ENCODE measurements at regions of chr16 and their contacts with region 1.

Region 1: DNA sequence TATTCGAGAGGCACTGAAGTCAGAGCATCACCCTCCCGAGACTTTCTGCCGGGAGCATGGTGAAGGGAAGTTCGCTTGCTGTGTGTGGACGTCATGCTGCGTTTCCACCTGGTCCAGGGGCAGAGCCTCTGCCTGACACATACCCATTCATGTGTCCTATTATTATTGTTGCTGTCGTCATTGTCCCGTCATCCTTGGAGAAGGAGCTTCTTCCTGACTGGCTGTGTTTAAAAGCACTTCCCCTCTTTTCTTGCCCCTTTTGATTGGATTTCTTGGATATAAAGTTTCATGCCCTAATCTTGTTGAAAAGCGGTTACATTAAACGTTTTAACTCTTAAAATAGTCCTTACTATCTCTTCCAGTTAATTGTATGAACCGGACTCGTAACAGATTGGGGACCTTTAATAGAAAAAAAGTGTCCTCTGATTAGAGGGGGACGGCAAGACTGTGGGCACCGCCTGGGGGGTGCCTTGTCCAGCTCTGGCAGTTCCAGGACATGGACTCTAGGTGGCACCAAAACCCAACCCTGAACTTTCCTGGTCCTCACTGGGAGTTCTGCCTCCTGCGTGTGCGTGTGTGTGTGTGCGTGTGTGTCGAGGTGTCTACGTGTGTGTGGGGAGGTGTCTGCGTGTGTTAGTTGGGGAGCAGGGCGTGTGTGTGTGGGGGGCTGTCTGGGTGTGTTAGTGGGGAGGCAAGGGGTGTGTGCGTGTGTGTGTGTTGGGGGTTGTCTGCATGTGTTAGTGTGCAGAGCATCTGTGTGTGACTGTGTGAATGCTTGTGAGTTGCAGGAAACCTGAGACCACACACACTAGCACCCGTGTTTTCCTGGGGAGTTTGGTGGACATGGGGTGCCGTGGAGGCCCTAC is 133.3 kb upstream of the CIBAR2 start:
- DNase-seq: peak in 7 of 10 donors; percentile 48 to 70 (median 56)
- H3K4me3 ChIP-seq: no peak overlapping the region
- H3K27ac ChIP-seq: no peak overlapping the region
- H3K27me3 ChIP-seq: peaks cover 0 to 7% (median 0%) of the 10 kb centered on the region in 45 donors
- CTCF ChIP-seq: peak; percentile 17 to 84 (median 76)

Region 2: GRCh38 chr16:85057212-85057889 is 188.2 kb before region 1 on chr16:
- intact Hi-C with region 1: no loop called
- DNase-seq: no peak
- H3K4me3 ChIP-seq: no peak overlapping the region
- H3K27ac ChIP-seq: peak overlapping the region in 8 of 59 donors; percentile 13 to 77 (median 36)
- H3K27me3 ChIP-seq: no peaks in the 10 kb centered on the region
- CTCF ChIP-seq: peak in 4 of 56 donors; percentile 10 to 19 (median 16)

Region 3: GRCh38 chr16:85137323-85138072 is 108.0 kb before region 1 on chr16:
- intact Hi-C with region 1: loop called in 1 of 2 experiments (anchors 10 kb)
- DNase-seq: peak; percentile 60 to 91 (median 86)
- H3K4me3 ChIP-seq: peak overlapping the region in 56 of 59 donors; percentile 6 to 65 (median 40)
- H3K27ac ChIP-seq: peak overlapping the region in 47 of 59 donors; percentile 11 to 80 (median 60)
- H3K27me3 ChIP-seq: no peaks in the 10 kb centered on the region
- CTCF ChIP-seq: peak in 21 of 56 donors; percentile 10 to 51 (median 21)

Measured in dorsolateral prefrontal cortex (tissue), 120 donors.